ENCODE measurements at regions of chr3 and their contacts with region 1.

Region 1: GRCh38 chr3:102069211-102069662 is 219.9 kb downstream of the NFKBIZ start:
- DNase-seq: peak; percentile 91
- ATAC-seq: peak; percentile 98
- H3K4me3 ChIP-seq: no peak overlapping the region
- H3K27ac ChIP-seq: no peak overlapping the region
- H3K4me1 ChIP-seq: peaks cover 4% of the 10 kb centered on the region
- H3K27me3 ChIP-seq: no peaks in the 10 kb centered on the region
- CTCF ChIP-seq: no peak
- POLR2A ChIP-seq: no peak
- RAD21 ChIP-seq: no peak

Region 2: DNA sequence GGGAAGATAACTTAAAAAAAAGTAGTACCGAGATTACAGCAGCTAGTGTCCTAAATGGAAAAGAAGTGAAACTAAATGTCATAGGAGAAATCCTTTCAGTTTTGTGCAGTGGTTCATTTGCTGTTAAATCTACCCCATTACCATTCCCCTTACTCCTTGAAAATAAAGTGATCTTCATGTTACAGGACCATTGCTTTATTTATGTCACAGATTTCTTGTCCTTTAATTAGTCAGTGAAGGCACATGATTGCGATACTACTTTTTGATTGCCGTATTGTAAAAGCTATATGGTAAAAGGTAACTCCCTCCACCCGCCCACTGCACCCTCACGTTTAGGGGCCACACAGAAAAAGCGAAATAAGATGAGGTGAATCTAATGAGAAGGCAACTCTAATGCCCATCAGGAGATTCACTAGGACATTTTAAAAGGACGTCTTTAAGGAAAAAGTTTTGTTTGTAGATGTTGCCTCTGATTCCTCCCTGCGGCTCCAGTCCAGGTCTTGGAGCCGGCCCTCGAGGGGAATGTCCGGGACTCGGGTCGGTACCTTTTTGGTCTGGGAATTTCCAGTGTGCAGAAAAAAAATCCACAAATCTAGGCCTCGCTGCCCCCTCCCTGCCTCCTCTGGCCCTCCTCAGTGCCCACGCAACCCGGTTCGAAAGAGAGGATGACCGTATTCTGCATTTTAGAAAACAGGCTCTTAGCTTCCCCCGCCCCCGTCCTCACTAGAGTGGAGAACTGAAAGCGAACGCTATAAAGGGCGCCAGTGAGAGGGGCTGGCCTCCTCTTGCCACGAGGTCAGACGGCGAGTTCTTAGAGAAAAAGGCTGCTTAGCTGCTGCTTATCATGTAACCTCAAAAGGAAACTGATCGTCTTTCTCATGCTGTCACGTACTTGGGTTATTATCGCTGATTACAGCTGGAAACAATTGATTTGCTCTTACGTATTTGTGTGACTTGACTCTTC is 241.7 kb before region 1 on chr3:
- CTCF ChIA-PET with region 1: no interaction called
- POLR2A ChIA-PET with region 1: no interaction called
- dilution Hi-C with region 1: no loop called
- in situ Hi-C with region 1: no loop called
- intact Hi-C with region 1: loop called (anchors 1 kb)
- DNase-seq: peak; percentile 84
- ATAC-seq: peak; percentile 82
- H3K4me3 ChIP-seq: peak overlapping the region; percentile 51
- H3K27ac ChIP-seq: peak overlapping the region; percentile 97
- H3K4me1 ChIP-seq: peaks cover 4% of the 10 kb centered on the region; the same call in 1 of the 2 replicates
- H3K27me3 ChIP-seq: no peaks in the 10 kb centered on the region
- CTCF ChIP-seq: no peak
- POLR2A ChIP-seq: peak; percentile 83
- RAD21 ChIP-seq: no peak